Naive thymus-derived CD4-positive, alpha-beta T cell (primary cell): ENCODE measurements at regions of chr5 and their contacts with region 1.

Region 1: GRCh38 chr5:96752341-96753016 is 55.3 kb downstream of the ERAP1 start:
- DNase-seq: peak in 7 of 9 donors; percentile 46 to 72 (median 60)
- ATAC-seq: peak; percentile 70
- H3K4me3 ChIP-seq: no peak overlapping the region
- H3K4me3 Mint-ChIP-seq: no peak overlapping the region
- H3K27ac ChIP-seq: no peak overlapping the region
- H3K27ac Mint-ChIP-seq: peak overlapping the region in 6 of 9 donors; percentile 36 to 67 (median 56)
- H3K4me1 ChIP-seq: no peaks in the 10 kb centered on the region
- H3K4me1 Mint-ChIP-seq: peaks cover 0 to 8% (median 0%) of the 10 kb centered on the region in 7 donors
- H3K27me3 ChIP-seq: no peaks in the 10 kb centered on the region
- H3K27me3 Mint-ChIP-seq: no peaks in the 10 kb centered on the region

Region 2: DNA sequence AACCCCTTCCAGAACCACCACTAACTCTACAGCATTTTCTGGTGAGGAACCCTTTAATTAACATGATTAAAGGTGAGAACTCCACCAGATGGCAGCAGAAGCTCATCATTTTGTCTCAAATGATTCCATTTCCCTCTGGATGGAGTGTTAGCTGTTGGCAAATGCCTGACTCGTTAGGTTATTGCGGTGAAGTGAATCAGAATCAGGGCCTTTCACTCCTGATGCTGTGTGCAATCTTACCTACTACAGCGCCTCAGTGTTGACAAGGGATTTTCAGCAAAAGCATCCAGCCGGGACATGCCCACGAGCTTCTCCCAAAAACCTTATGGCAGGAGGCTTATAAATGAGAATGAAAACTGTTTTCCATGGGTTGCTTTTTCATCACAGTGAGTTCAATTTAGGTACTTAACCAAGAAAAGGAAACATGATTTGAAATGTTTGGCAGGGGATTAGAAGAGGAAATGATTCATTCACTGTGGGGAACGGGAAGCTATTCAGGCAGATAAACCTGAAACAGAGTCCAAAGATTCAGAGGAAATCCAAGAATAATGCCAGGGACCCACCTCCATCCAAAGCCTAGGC is 138.3 kb before region 1 on chr5:
- CTCF ChIA-PET with region 1: interaction called, 4 read pairs
- POLR2A ChIA-PET with region 1: no interaction called
- intact Hi-C with region 1: loop called in 1 of 2 experiments (anchors 2 kb)
- DNase-seq: peak in 6 of 9 donors; percentile 30 to 51 (median 38)
- ATAC-seq: peak; percentile 72
- H3K4me3 ChIP-seq: no peak overlapping the region
- H3K4me3 Mint-ChIP-seq: no peak overlapping the region
- H3K27ac ChIP-seq: no peak overlapping the region
- H3K27ac Mint-ChIP-seq: no peak overlapping the region
- H3K4me1 ChIP-seq: peaks cover 0 to 5% of the 10 kb centered on the region in 2 donors
- H3K4me1 Mint-ChIP-seq: peaks cover 0 to 5% (median 0%) of the 10 kb centered on the region in 7 donors
- H3K27me3 ChIP-seq: no peaks in the 10 kb centered on the region
- H3K27me3 Mint-ChIP-seq: peaks cover 5 to 43% (median 8%) of the 10 kb centered on the region in 5 donors

Region 3: DNA sequence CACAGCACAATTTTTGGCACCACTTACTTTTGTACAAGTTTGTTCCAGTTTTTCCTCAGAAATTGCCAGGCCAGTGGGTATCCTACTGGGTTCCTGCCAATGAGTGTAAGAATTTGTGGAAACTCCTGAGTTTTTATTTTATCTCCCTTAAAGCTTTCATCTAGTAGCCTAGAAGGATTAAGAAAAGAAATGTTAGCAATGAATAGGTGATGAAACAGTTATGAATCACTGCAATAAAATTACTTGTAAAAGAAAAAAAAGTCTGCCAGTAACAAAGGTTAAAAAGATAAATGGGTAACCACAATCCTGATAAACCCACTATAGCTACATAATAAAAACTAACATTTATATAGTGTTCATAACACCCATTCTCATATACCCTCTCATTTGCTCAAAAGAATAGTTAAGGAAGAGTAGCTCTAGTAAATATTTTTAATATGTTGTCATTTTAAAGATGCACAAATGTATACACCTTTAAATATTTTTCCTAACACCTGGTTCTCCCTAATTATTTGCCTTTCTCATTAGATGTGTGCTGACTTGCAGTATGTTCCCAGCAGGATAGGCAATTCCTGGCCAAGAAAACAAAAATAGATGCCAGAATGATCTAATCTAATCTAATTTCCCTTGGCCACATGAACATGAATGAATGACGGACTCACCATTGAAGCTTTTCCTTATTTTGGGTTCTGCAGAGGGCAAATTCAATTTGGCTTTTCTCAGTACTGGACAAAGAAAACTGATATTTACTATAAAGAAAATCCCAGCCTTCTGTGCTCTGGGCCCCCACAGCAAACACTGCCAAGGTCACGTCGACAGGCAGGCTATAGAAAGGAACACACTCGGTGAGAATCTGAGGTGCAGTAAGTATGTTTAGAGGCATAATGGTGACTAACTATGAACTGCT is 28.8 kb after region 1 on chr5:
- CTCF ChIA-PET with region 1: no interaction called
- POLR2A ChIA-PET with region 1: no interaction called
- intact Hi-C with region 1: loop called in 1 of 2 experiments (anchors 2 kb)
- DNase-seq: no peak
- ATAC-seq: no peak
- H3K4me3 ChIP-seq: no peak overlapping the region
- H3K4me3 Mint-ChIP-seq: no peak overlapping the region
- H3K27ac ChIP-seq: no peak overlapping the region
- H3K27ac Mint-ChIP-seq: peak overlapping the region in 8 of 9 donors; percentile 27 to 77 (median 64)
- H3K4me1 ChIP-seq: no peaks in the 10 kb centered on the region
- H3K4me1 Mint-ChIP-seq: peaks cover 0 to 15% (median 4%) of the 10 kb centered on the region in 7 donors
- H3K27me3 ChIP-seq: no peaks in the 10 kb centered on the region
- H3K27me3 Mint-ChIP-seq: no peaks in the 10 kb centered on the region

Region 4: DNA sequence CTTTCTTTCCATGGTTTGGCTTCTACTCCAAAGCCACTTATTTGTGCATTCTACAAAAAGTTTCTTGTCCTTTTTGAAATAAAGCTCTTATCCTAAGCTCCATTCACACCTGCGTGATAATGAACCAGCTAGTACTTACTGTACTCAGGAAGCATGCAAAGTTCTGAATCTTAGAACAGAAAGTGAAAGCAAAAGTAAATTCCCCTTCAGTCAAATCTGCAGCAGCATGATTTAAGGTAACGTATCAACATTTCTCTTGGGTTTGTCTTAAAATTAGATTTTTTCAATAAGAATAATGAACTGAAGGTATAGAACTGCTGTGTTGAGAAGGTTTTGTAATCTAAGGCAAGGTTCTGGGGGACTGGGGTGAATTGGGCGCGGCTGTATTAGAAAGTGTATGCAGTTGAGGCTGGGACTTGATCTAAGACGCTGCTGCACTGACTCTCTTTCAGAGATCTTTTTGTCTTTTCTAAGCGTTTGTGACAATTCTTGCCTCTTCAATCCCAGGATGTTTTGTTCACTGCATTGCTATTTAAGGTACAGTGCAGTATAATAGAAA is 123.9 kb after region 1 on chr5 and contains the start of gene ERAP2:
- CTCF ChIA-PET with region 1: no interaction called
- POLR2A ChIA-PET with region 1: no interaction called
- intact Hi-C with region 1: loop called in 1 of 2 experiments (anchors 5 kb)
- DNase-seq: peak in 7 of 9 donors; percentile 53 to 73 (median 64)
- ATAC-seq: peak; percentile 79
- H3K4me3 ChIP-seq: peak within 1 kb of the TSS; percentile 85
- H3K4me3 Mint-ChIP-seq: peak within 1 kb of the TSS; percentile 81 to 99 (median 96)
- H3K27ac ChIP-seq: peak within 1 kb of the TSS; percentile 80
- H3K27ac Mint-ChIP-seq: peak within 1 kb of the TSS; percentile 91 to 99 (median 97)
- H3K4me1 ChIP-seq: peaks cover 26 to 56% of the 10 kb centered on the region in 2 donors
- H3K4me1 Mint-ChIP-seq: peaks cover 44 to 76% (median 73%) of the 10 kb centered on the region in 7 donors
- H3K27me3 ChIP-seq: no peaks in the 10 kb centered on the region
- H3K27me3 Mint-ChIP-seq: no peaks in the 10 kb centered on the region
- total RNA-seq, gene ERAP2: 42.5 to 158 (median 97.2) TPM

Region 5: GRCh38 chr5:97162045-97162444 is 409.6 kb after region 1 on chr5:
- CTCF ChIA-PET with region 1: interaction called, 29 read pairs
- POLR2A ChIA-PET with region 1: interaction called, 5 read pairs
- intact Hi-C with region 1: loop called (anchors 1 kb)
- DNase-seq: peak in 7 of 9 donors; percentile 23 to 64 (median 45)
- ATAC-seq: peak; percentile 62
- H3K4me3 ChIP-seq: no peak overlapping the region
- H3K4me3 Mint-ChIP-seq: no peak overlapping the region
- H3K27ac ChIP-seq: no peak overlapping the region
- H3K27ac Mint-ChIP-seq: no peak overlapping the region
- H3K4me1 ChIP-seq: no peaks in the 10 kb centered on the region
- H3K4me1 Mint-ChIP-seq: peaks cover 0 to 17% (median 11%) of the 10 kb centered on the region in 7 donors
- H3K27me3 ChIP-seq: no peaks in the 10 kb centered on the region
- H3K27me3 Mint-ChIP-seq: peaks cover 0 to 4% (median 0%) of the 10 kb centered on the region in 5 donors

Region 6: DNA sequence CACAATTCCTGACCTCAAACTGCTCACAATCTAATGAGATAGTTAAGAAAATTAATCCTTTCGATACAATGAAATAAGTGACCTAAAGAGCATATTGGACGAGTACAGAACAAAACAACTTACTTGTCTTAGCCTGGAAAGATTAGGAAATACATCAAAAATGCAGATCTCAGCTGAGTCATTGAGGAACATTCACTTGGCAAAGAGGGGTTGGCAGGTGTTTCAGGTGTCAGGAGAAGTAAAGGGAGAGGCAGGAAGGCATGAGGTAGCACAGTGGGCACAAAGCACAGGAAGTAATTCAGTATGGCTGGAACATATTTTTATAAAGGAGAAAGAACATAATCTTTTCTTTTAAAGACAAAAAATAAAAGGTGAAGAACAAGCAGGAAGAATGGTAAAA is 1392.2 kb after region 1 on chr5:
- CTCF ChIA-PET with region 1: no interaction called
- POLR2A ChIA-PET with region 1: no interaction called
- intact Hi-C with region 1: no loop called
- DNase-seq: no peak
- ATAC-seq: no peak
- H3K4me3 ChIP-seq: no peak overlapping the region
- H3K4me3 Mint-ChIP-seq: no peak overlapping the region
- H3K27ac ChIP-seq: no peak overlapping the region
- H3K27ac Mint-ChIP-seq: no peak overlapping the region
- H3K4me1 ChIP-seq: no peaks in the 10 kb centered on the region
- H3K4me1 Mint-ChIP-seq: no peaks in the 10 kb centered on the region
- H3K27me3 ChIP-seq: peaks cover 0 to 2% of the 10 kb centered on the region in 2 donors
- H3K27me3 Mint-ChIP-seq: no peaks in the 10 kb centered on the region